Dorsolateral prefrontal cortex (tissue), 120 donors: ENCODE measurements at regions of chr1 and their contacts with region 1.

Region 1: DNA sequence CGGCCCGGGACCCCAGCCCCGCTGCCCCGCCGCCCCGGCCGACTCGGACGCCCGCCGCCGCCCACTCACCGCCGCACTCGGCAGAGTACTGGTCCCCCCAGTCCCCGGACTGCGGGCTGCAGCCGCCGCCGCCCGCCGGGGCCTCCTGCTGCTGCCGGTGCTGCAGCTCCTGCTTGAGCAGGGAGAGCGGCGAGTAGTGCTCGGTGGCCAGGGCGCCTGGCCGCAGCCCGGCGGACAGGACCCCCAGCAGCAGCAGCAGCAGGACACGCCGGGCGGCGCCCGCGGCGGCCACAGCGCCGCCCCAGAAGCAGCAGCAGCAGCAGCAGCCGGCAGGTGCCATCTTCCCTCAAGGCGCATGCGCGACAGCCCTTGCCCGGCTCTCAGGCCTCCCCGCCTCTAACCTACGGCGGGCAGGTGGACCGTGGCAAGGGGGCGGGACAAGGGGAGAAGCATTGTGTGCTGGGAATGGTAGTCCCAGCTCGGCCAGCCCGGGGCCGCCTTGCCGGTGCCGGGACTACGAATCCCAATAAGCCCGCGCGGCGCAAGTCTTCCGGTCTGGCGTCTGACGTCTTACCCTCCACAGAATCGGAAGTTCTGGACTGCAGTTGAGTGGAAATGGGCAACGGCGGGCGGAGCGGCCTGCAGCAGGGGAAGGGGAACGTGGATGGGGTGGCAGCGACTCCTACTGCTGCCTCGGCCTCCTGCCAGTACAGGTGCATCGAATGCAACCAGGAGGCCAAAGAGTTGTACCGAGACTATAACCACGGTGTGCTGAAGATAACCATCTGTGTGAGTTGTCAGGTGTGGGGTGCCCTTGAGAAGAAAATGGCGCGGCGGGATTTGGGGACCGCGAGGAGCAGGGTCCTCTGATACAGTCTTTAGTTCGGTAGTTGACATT is at the starts of genes ARV1 and TTC13:
- DNase-seq: peak; percentile 97 to 99 (median 99)
- H3K4me3 ChIP-seq: peak within 1 kb of the TSS; percentile 67 to 99 (median 87)
- H3K27ac ChIP-seq: peak within 1 kb of the TSS in 57 of 59 donors; percentile 5 to 89 (median 74)
- H3K27me3 ChIP-seq: no peaks in the 10 kb centered on the region
- CTCF ChIP-seq: peak in 51 of 56 donors; percentile 6 to 73 (median 46)
- total RNA-seq, gene ARV1: 13.5 to 33.0 (median 23.5) TPM
- total RNA-seq, gene TTC13: 15.5 to 38.2 (median 26.9) TPM

Region 2: DNA sequence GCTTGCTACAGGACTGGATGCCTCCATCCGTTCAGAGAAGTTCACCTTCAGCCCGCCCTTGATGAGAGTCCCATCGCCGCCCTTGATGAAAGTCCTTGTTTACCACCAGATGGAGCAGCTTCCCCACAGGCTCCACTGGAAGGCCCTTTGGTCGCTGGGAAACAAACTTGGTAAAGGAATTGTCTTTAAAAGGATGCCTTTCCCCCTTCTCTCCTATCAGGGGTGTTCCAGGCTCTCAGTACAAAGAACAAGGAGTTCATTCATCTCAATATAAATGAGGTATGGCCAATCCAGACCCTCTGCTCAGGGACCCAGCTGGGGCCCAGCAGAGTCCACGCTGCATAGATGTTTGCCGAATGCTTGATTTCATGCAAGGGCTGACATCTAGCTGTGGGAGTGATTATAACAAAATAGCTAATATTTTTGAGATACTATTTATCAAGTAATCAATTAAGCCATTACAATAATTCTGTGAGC is 180.8 kb before region 1 on chr1:
- intact Hi-C with region 1: loop called in 1 of 2 experiments (anchors 5 kb)
- DNase-seq: peak; percentile 48 to 78 (median 74)
- H3K4me3 ChIP-seq: peak overlapping the region in 4 of 59 donors; percentile 2 to 46 (median 10)
- H3K27ac ChIP-seq: peak overlapping the region in 56 of 59 donors; percentile 16 to 92 (median 82)
- H3K27me3 ChIP-seq: no peaks in the 10 kb centered on the region
- CTCF ChIP-seq: peak; percentile 25 to 95 (median 87)

Region 3: GRCh38 chr1:230867903-230868735 is 110.6 kb before region 1 on chr1 and contains the start of gene C1orf198:
- intact Hi-C with region 1: loop called in 1 of 2 experiments (anchors 10 kb)
- DNase-seq: peak; percentile 63 to 86 (median 76)
- H3K4me3 ChIP-seq: peak within 1 kb of the TSS; percentile 48 to 99 (median 90)
- H3K27ac ChIP-seq: peak within 1 kb of the TSS; percentile 46 to 97 (median 93)
- H3K27me3 ChIP-seq: no peaks in the 10 kb centered on the region
- CTCF ChIP-seq: peak in 1 of 56 donors; percentile 21
- total RNA-seq, gene C1orf198: 43.1 to 244 (median 83.2) TPM

Region 4: DNA sequence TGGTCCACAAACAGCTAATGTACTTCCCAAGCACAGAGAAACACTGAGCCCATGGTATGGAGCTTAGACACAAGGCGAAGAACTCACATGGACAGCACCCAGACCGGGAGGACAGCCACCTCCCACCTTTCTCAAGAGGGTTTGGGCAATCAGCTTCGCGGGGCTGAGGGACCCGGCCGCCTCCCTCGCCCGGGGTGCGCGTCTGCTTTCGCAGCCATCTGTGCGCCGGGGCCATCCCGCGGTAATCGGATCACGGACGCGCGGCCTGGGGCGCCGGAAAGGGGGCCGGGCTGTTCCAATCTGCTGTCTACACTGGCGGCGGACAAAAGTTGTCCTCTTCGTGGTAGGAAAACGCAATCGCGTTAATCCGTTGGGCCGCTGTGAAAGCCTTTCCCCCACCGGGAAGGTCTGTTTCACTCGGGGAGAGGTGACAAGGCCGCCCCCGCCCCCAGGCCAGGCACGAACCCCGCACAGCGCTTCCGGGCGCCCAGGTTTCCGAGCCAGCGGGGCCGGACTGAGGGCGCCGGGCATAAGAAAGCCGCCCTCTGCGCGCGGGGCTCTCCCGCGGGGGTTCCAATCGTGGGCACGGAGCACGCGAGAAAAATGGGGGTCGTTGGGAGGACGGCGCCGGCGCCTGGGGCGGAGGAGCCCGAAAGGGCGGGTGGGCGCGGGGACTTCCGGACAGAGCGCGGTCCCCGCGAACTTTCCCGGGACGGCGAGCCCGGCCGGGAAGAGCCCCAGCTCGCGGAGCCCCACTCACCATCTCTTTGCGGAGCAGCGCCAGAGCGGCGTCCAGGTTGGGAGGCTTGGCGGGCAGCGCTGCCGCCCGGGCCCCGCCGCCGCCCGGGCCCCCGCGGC is 60.6 kb after region 1 on chr1:
- intact Hi-C with region 1: loop called in 1 of 2 experiments (anchors 5 kb)
- DNase-seq: no peak
- H3K4me3 ChIP-seq: peak overlapping the region; percentile 45 to 86 (median 69)
- H3K27ac ChIP-seq: peak overlapping the region in 33 of 59 donors; percentile 1 to 80 (median 46)
- H3K27me3 ChIP-seq: peaks cover 0 to 16% (median 2%) of the 10 kb centered on the region in 45 donors
- CTCF ChIP-seq: no peak

Region 5: DNA sequence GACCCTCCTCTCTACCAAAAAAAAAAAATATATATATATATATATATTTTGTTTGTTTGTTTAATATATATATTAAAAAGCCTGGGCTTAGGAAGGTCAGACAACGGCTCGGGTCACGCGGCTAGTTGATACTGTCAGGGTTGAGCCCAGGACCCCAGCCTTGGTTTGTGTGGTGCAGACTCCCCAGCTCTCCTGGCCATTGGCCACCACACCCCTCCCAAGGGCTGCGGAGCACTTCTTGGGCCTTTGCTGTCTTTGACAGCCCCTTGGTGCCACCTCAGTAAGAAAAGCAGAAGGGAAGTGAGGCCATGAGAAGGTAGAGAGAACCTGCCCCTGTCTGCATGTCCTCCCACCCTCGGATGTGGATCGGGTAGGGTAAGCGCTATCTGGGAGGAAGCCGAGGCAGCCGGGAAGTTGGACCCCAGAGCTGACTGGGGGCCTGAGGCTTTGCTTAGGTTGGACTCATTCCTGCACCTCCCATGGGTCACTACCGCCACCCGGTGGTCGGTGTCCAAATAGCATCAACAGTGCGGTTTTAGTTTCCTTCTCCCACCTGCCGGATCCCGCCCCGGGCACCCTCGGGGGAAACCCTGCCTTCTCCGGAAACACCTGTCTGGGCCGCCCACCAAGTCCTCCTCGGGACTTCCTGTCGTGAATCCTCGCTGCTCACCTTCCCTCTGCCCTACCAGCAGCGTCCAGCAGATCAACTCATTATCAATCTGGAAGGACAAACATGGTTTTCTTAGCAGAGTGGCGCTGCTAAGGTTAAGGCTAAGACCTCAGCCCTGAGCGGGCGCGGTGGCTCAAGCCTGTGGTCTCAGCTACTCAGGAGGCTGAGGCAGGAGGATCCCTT is 232.5 kb after region 1 on chr1:
- intact Hi-C with region 1: loop called in 1 of 2 experiments (anchors 5 kb)
- DNase-seq: peak; percentile 69 to 87 (median 82)
- H3K4me3 ChIP-seq: peak overlapping the region; percentile 15 to 73 (median 53)
- H3K27ac ChIP-seq: peak overlapping the region in 2 of 59 donors; percentile 53 to 58
- H3K27me3 ChIP-seq: peaks cover 0 to 2% (median 0%) of the 10 kb centered on the region in 45 donors
- CTCF ChIP-seq: peak; percentile 82 to 99 (median 95)

Region 6: GRCh38 chr1:231337472-231338269 is 358.9 kb after region 1 on chr1 and contains the start of gene EXOC8:
- intact Hi-C with region 1: loop called in 1 of 2 experiments (anchors 10 kb)
- DNase-seq: peak; percentile 89 to 96 (median 92)
- H3K4me3 ChIP-seq: peak within 1 kb of the TSS; percentile 63 to 99 (median 92)
- H3K27ac ChIP-seq: peak within 1 kb of the TSS; percentile 51 to 97 (median 86)
- H3K27me3 ChIP-seq: no peaks in the 10 kb centered on the region
- CTCF ChIP-seq: peak in 19 of 56 donors; percentile 7 to 47 (median 22)
- total RNA-seq, gene EXOC8: 13.8 to 26.2 (median 20.8) TPM